HepG2 (cell line): ENCODE measurements at regions of chr4 and their contacts with region 1.

Region 1: GRCh38 chr4:674172-675035 is at the starts of genes ATP5ME and MYL5:
- DNase-seq: peak; percentile 93
- ATAC-seq: peak; percentile 76
- H3K4me3 ChIP-seq: peak within 1 kb of the TSS; percentile 67 to 90 (median 83)
- H3K27ac ChIP-seq: peak within 1 kb of the TSS; percentile 80
- H3K4me1 ChIP-seq: peaks cover 61% of the 10 kb centered on the region
- H3K27me3 ChIP-seq: no peaks in the 10 kb centered on the region
- CTCF ChIP-seq: peak; percentile 97
- EP300 ChIP-seq: 0 out of 4 replicates have a peak, but pooled peaks of 1 of the 2 experiments have one; percentile 10
- POLR2A ChIP-seq: peak in 1 of 2 experiments; percentile 84; a peak in 2 of 4 replicates
- RAD21 ChIP-seq: peak; percentile 83
- total RNA-seq, gene ATP5ME: 753 and 1,048 TPM in 2 replicates
- total RNA-seq, gene MYL5: 11.0 and 16.0 TPM in 2 replicates

Region 2: DNA sequence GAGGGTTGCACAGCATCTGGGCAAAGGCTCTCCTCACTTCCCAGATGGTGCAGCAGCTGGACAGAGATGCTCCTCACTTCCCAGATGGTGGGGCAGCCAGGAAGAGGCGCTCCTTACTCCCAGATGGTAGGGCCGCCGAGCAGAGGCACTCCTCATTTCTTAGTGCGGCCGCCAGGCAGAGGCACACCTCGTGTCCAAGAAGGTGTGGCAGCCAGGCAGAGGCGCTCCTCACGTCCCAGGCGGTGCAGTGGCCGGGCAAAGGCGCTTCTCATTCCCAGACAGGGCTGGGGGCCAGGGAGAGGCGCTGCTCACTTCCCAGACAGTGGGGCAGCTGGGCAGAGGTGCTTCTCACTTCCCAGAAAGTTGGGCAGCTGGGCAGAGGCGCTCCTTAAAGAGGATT is 417.9 kb before region 1 on chr4:
- CTCF ChIA-PET with region 1: no interaction called
- POLR2A ChIA-PET with region 1: no interaction called
- in situ Hi-C with region 1: no loop called
- intact Hi-C with region 1: loop called (anchors 2 kb)
- DNase-seq: no peak
- ATAC-seq: no peak
- H3K4me3 ChIP-seq: no peak overlapping the region
- H3K27ac ChIP-seq: no peak overlapping the region
- H3K4me1 ChIP-seq: no peaks in the 10 kb centered on the region
- H3K27me3 ChIP-seq: no peaks in the 10 kb centered on the region
- CTCF ChIP-seq: no peak
- EP300 ChIP-seq: no peak
- POLR2A ChIP-seq: no peak
- RAD21 ChIP-seq: no peak

Region 3: DNA sequence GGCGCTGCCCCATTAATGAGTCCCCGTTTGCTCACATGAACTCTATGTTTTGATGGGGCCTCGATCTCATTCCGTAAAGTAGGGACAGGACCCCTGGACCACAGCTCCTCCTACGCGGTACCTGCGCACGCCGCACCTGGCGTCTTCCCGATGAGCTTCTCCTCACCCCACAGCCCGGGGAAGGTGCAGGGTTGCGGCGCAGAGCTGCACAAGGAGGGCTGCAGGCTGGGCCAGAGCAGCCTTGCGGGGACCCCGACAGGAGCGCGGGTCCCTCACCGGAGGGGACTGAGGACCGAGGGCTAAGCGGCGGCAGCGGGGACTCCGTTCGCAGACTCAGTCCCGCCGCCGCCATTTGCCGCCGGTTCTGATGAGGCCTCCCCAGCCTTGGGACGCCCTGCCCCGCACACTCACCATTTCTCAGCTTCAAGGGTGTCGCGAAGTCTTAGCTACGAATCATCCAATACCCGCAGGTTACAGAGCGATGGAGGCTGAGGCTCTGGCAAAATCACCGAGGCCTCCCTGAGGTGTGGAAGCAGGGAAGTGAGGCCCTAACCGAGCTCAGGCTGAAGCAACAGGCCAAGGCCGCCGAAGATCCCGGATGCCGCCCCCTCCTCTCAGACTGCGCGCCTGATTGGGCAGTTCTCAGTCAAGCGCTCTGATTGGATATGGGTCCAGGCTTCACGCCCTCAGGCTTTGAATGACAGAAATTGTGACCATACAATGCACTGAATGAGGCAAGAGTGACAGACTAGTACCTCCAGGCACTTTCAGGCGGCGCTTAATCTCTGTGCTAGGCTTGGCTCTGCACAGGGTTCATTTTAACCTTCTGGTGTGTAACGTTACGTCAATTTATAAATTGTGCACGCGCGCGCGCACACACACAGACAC is 200.6 kb before region 1 on chr4:
- CTCF ChIA-PET with region 1: no interaction called
- POLR2A ChIA-PET with region 1: interaction called, 4 read pairs
- in situ Hi-C with region 1: no loop called
- intact Hi-C with region 1: loop called (anchors 10 kb)
- DNase-seq: peak; percentile 99
- ATAC-seq: peak; percentile 99
- H3K4me3 ChIP-seq: peak overlapping the region; percentile 83 to 95 (median 90)
- H3K27ac ChIP-seq: peak overlapping the region; percentile 94
- H3K4me1 ChIP-seq: peaks cover 11% of the 10 kb centered on the region
- H3K27me3 ChIP-seq: no peaks in the 10 kb centered on the region; a peak in 1 of 5 replicates
- CTCF ChIP-seq: no peak
- EP300 ChIP-seq: 0 out of 4 replicates have a peak, but pooled peaks of 1 of the 2 experiments have one; percentile 24
- POLR2A ChIP-seq: peak; percentile 94 to 98
- RAD21 ChIP-seq: peak; percentile 22; the same call in 1 of the 2 replicates

Region 4: DNA sequence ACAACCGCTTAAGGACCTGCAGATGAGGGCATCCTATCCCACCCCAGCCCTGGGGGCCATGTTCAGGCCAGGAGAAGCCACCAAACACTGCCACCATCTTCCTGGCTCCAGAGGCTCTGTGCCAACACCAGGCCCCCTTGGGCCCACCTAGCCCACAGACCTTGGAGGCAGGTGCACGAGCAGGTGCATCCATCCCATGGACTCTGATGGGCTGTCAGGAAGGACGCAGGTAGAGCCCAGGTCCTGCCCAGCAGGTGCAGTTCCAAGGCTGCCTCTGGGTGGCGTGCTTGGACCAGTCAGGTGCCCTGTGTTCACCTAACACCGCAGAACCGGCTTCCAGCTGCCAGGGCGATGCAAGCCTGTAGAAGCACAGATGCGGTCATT is 71.9 kb before region 1 on chr4:
- CTCF ChIA-PET with region 1: interaction called, 3 read pairs
- POLR2A ChIA-PET with region 1: no interaction called
- in situ Hi-C with region 1: no loop called
- intact Hi-C with region 1: loop called (anchors 1 kb)
- DNase-seq: peak; percentile 60
- ATAC-seq: peak; percentile 99
- H3K4me3 ChIP-seq: no peak overlapping the region
- H3K27ac ChIP-seq: no peak overlapping the region
- H3K4me1 ChIP-seq: no peaks in the 10 kb centered on the region
- H3K27me3 ChIP-seq: peaks cover 7 to 65% of the 10 kb centered on the region in 2 experiments; a peak in 4 of 5 replicates
- CTCF ChIP-seq: peak; percentile 97
- EP300 ChIP-seq: no peak
- POLR2A ChIP-seq: no peak
- RAD21 ChIP-seq: peak; percentile 91

Region 5: DNA sequence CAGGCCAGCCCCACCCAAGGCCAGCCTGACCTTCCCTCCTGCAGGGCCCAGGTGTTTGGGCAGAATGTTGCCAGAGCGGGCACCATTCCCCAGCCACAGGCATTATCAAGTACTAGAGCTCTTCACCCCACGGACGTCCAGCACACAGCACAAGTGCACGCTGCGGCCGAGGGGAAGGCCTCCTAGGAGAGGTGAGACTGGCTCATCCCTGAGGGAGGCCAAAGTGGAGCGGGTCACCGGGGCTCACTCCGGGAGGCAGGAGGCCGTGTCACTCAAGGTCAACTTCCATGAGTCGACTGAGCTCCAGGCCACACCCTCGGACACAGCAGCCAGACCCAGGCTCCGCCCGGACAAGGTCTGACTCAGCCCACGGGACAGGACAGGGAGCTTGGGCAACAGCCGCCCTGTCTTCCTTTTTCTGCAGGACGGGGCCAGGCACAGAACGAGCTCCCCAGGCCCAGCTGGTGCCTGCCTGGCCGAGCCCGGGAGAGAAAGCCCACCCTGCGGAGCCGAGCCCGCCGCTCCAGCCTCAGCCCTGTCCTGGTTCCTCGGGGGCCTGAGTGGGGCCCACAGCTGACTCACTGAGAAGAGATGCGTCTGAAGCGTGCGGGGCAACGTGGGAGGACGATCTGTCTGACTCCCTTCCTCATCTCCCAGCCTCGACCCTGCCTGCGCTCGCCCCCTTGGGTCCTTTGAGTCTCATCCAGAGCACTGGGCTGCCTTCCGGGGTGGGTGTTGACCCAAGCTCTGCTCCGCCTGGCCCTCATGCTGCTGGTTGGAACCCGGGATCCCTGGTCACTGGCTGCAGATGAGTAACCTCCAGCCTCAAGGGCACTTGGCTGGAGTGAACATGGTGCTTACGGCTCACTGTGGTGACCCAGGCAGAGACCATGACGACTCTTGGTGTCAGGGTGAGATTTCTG is 12.9 kb after region 1 on chr4:
- CTCF ChIA-PET with region 1: no interaction called
- POLR2A ChIA-PET with region 1: interaction called, 14 read pairs
- in situ Hi-C with region 1: no loop called
- intact Hi-C with region 1: no loop called
- DNase-seq: peak; percentile 90
- ATAC-seq: peak; percentile 79
- H3K4me3 ChIP-seq: peak overlapping the region; percentile 56 to 71 (median 63)
- H3K27ac ChIP-seq: peak overlapping the region; percentile 62
- H3K4me1 ChIP-seq: peaks cover 79% of the 10 kb centered on the region
- H3K27me3 ChIP-seq: peaks cover 1 to 3% of the 10 kb centered on the region in 2 experiments; a peak in 1 of 5 replicates
- CTCF ChIP-seq: peak; percentile 19; the same call in 1 of the 2 replicates
- EP300 ChIP-seq: no peak
- POLR2A ChIP-seq: peak in 1 of 2 experiments; percentile 65; a peak in 2 of 4 replicates
- RAD21 ChIP-seq: no peak